Activated naive CD4-positive, alpha-beta T cell treated with anti-CD3 and anti-CD28 coated beads for 36 hours (primary cell): ENCODE measurements at regions of chr2 and their contacts with region 1.

Region 1: GRCh38 chr2:222860740-222861410 is at the start of gene ACSL3:
- DNase-seq: peak; percentile 95
- H3K4me3 Mint-ChIP-seq: peak within 1 kb of the TSS; percentile 75
- H3K27ac Mint-ChIP-seq: peak within 1 kb of the TSS; percentile 76
- H3K4me1 Mint-ChIP-seq: peaks cover 6% of the 10 kb centered on the region
- H3K27me3 Mint-ChIP-seq: no peaks in the 10 kb centered on the region
- total RNA-seq, gene ACSL3: 35.1 to 36.1 TPM

Region 2: GRCh38 chr2:222424729-222425671 is 435.9 kb before region 1 on chr2:
- CTCF ChIA-PET with region 1: no interaction called
- intact Hi-C with region 1: loop called (anchors 10 kb)
- DNase-seq: peak; percentile 67
- H3K4me3 Mint-ChIP-seq: peak overlapping the region; percentile 83
- H3K27ac Mint-ChIP-seq: peak overlapping the region; percentile 88
- H3K4me1 Mint-ChIP-seq: peaks cover 42% of the 10 kb centered on the region
- H3K27me3 Mint-ChIP-seq: peaks cover 56% of the 10 kb centered on the region

Region 3: DNA sequence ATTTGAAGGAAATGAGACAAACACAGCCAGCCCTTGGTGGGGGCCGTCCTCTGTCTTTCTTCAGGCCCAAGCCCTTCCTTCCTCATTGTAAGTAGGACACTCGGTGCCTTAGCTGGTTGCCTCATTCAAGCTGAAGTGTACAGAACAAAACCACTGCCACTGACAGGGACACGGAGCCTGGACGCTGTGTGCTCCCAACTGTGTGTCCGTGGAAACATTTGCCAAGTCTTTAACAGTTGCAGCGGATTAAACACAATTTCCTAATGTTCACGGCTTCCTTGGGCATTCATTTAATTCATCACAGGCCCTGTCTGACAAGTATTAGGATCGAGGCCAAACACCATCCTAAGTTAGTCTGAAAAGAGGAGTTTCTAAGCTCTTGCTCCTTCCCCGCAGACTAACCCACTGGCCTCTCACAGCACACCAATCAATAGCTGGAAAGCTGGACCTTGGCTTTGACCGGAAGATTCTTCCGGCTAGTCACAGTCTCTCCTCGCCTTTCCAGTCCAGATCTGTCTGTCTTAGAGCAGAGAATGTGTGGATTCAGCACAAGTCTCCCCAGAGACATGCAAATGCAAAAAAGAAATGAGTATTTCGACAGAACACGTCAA is 68.8 kb before region 1 on chr2:
- CTCF ChIA-PET with region 1: interaction called, 4 read pairs
- intact Hi-C with region 1: loop called (anchors 1 kb)
- DNase-seq: no peak
- H3K4me3 Mint-ChIP-seq: no peak overlapping the region
- H3K27ac Mint-ChIP-seq: no peak overlapping the region
- H3K4me1 Mint-ChIP-seq: peaks cover 20% of the 10 kb centered on the region
- H3K27me3 Mint-ChIP-seq: no peaks in the 10 kb centered on the region

Region 4: GRCh38 chr2:222872551-222872950 is 11.7 kb after region 1 on chr2:
- CTCF ChIA-PET with region 1: no interaction called
- intact Hi-C with region 1: no loop called
- DNase-seq: no peak
- H3K4me3 Mint-ChIP-seq: no peak overlapping the region
- H3K27ac Mint-ChIP-seq: no peak overlapping the region
- H3K4me1 Mint-ChIP-seq: peaks cover 27% of the 10 kb centered on the region
- H3K27me3 Mint-ChIP-seq: no peaks in the 10 kb centered on the region

Region 5: GRCh38 chr2:222903234-222904220 is 42.7 kb after region 1 on chr2:
- CTCF ChIA-PET with region 1: interaction called, 7 read pairs
- intact Hi-C with region 1: loop called (anchors 2 kb)
- DNase-seq: peak; percentile 55
- H3K4me3 Mint-ChIP-seq: no peak overlapping the region
- H3K27ac Mint-ChIP-seq: no peak overlapping the region
- H3K4me1 Mint-ChIP-seq: peaks cover 23% of the 10 kb centered on the region
- H3K27me3 Mint-ChIP-seq: no peaks in the 10 kb centered on the region

Region 6: GRCh38 chr2:223692191-223692947 is 831.5 kb after region 1 on chr2:
- CTCF ChIA-PET with region 1: no interaction called
- intact Hi-C with region 1: loop called (anchors 5 kb)
- DNase-seq: peak; percentile 27
- H3K4me3 Mint-ChIP-seq: no peak overlapping the region
- H3K27ac Mint-ChIP-seq: no peak overlapping the region
- H3K4me1 Mint-ChIP-seq: peaks cover 5% of the 10 kb centered on the region
- H3K27me3 Mint-ChIP-seq: peaks cover 9% of the 10 kb centered on the region